CD14-positive monocyte (primary cell): ENCODE measurements at regions of chr13 and their contacts with region 1.

Region 1: GRCh38 chr13:27374650-27375049 is 49.8 kb upstream of the GTF3A start:
- DNase-seq: peak; percentile 64 to 69 (median 65)
- H3K4me3 ChIP-seq: no peak overlapping the region
- H3K4me3 Mint-ChIP-seq: no peak overlapping the region
- H3K27ac ChIP-seq: no peak overlapping the region
- H3K27ac Mint-ChIP-seq: peak overlapping the region in 1 of 7 donors; percentile 38
- H3K4me1 ChIP-seq: no peaks in the 10 kb centered on the region
- H3K4me1 Mint-ChIP-seq: peaks cover 5% of the 10 kb centered on the region
- H3K27me3 ChIP-seq: peaks cover 0 to 5% of the 10 kb centered on the region in 2 donors
- H3K27me3 Mint-ChIP-seq: peaks cover 1 to 14% (median 4%) of the 10 kb centered on the region in 3 donors
- CTCF ChIP-seq: peak; percentile 72

Region 2: GRCh38 chr13:27533155-27533643 is 158.5 kb after region 1 on chr13:
- intact Hi-C with region 1: loop called in 1 of 2 experiments (anchors 10 kb)
- DNase-seq: peak; percentile 63 to 71 (median 68)
- H3K4me3 ChIP-seq: peak overlapping the region in 2 of 3 experiments; percentile 20 to 64
- H3K4me3 Mint-ChIP-seq: peak overlapping the region; percentile 72 to 85
- H3K27ac ChIP-seq: no peak overlapping the region
- H3K27ac Mint-ChIP-seq: peak overlapping the region in 2 of 7 donors; percentile 30 to 73
- H3K4me1 ChIP-seq: peaks cover 4 to 8% of the 10 kb centered on the region in 2 donors
- H3K4me1 Mint-ChIP-seq: peaks cover 6% of the 10 kb centered on the region
- H3K27me3 ChIP-seq: no peaks in the 10 kb centered on the region
- H3K27me3 Mint-ChIP-seq: peaks cover 1 to 7% (median 6%) of the 10 kb centered on the region in 3 donors
- CTCF ChIP-seq: peak; percentile 96

Region 3: GRCh38 chr13:27988520-27988919 is 613.9 kb after region 1 on chr13 and contains the start of gene URAD:
- intact Hi-C with region 1: loop called in 1 of 2 experiments (anchors 5 kb)
- DNase-seq: no peak
- H3K4me3 ChIP-seq: no peak within 1 kb of the TSS
- H3K4me3 Mint-ChIP-seq: no peak within 1 kb of the TSS
- H3K27ac ChIP-seq: no peak within 1 kb of the TSS
- H3K27ac Mint-ChIP-seq: no peak within 1 kb of the TSS
- H3K4me1 ChIP-seq: no peaks in the 10 kb centered on the region
- H3K4me1 Mint-ChIP-seq: no peaks in the 10 kb centered on the region
- H3K27me3 ChIP-seq: peaks cover 0 to 2% of the 10 kb centered on the region in 2 donors
- H3K27me3 Mint-ChIP-seq: peaks cover 5 to 8% (median 8%) of the 10 kb centered on the region in 3 donors
- CTCF ChIP-seq: no peak
- polyA plus RNA-seq, gene URAD: 0.12 TPM in 1 of 3 donors, not detected in the others